Activated CD4-positive, alpha-beta memory T cell treated with anti-CD3 and anti-CD28 coated beads for 36 hours (primary cell): ENCODE measurements at regions of chr2 and their contacts with region 1.

Region 1: GRCh38 chr2:171319164-171319810 is 114.5 kb downstream of the METTL8 start:
- DNase-seq: peak; percentile 78
- H3K4me3 Mint-ChIP-seq: peak overlapping the region; percentile 69
- H3K27ac Mint-ChIP-seq: peak overlapping the region; percentile 99
- H3K4me1 Mint-ChIP-seq: peaks cover 61% of the 10 kb centered on the region
- H3K27me3 Mint-ChIP-seq: no peaks in the 10 kb centered on the region

Region 2: GRCh38 chr2:171095014-171095582 is 224.2 kb before region 1 on chr2:
- CTCF ChIA-PET with region 1: interaction called, 4 read pairs
- POLR2A ChIA-PET with region 1: no interaction called
- intact Hi-C with region 1: loop called (anchors 2 kb)
- DNase-seq: no peak
- H3K4me3 Mint-ChIP-seq: no peak overlapping the region
- H3K27ac Mint-ChIP-seq: peak overlapping the region; percentile 24
- H3K4me1 Mint-ChIP-seq: peaks cover 37% of the 10 kb centered on the region
- H3K27me3 Mint-ChIP-seq: no peaks in the 10 kb centered on the region

Region 3: DNA sequence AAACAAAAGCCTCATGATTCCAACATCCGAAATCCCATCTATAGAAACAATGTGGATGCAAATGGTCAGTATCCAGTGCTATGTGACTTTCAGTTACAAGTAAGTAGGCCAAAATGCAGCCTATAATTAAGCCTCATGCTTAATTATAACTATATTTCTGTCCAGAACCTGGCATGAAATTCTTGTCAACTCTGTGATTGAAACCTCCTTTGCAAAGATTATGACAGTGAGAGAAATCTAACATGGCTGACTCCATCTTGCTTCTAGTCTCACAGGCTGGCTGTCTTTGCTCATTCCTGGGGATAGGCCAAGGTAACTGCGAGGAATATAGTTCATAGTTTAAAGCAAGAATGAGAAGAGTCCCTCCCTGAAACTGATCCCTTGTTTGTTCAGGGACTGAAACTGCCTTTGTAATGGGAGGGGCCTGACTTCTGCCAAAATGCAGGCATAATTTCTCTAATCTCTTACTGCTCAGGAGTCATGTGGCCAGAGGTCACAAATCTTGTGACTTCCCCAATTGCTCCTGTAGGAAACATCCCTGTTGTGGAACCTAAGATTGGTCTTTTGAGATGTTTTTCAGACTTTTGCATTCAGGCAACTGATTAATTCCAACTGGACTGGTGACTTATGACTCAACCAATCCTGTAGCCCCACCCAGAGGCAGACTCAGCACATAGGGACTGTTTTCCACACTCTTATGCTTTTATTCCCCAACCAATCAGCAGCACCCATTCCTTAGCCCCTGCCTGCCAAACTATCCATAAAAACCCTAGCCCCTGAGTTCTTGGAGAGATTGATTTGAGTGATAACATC is 74.1 kb before region 1 on chr2:
- CTCF ChIA-PET with region 1: no interaction called
- POLR2A ChIA-PET with region 1: interaction called, 4 read pairs
- intact Hi-C with region 1: loop called (anchors 1 kb)
- DNase-seq: peak; percentile 13
- H3K4me3 Mint-ChIP-seq: no peak overlapping the region
- H3K27ac Mint-ChIP-seq: no peak overlapping the region
- H3K4me1 Mint-ChIP-seq: peaks cover 50% of the 10 kb centered on the region
- H3K27me3 Mint-ChIP-seq: no peaks in the 10 kb centered on the region

Region 4: DNA sequence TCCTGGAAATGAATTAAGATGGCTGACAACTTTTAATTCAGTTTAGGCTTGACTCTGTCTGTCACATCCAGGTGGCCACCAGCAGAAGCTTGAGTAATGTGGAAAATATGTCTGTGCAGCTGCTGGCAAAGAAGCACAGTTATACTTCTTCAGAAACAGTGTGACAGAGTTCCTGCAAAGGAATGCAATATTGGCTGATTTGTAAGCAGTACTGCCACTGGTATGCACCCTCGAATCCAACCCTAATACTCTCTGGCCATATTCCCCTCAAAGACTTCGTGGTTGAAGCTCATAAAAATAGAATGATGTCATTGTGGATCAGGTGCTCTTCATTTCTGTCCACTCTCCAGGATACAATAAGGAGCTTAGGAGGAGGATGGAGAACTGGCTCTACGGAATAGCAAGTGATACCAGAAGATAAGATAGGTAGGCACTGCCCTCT is 28.3 kb after region 1 on chr2:
- CTCF ChIA-PET with region 1: no interaction called
- POLR2A ChIA-PET with region 1: interaction called, 5 read pairs
- intact Hi-C with region 1: loop called (anchors 1 kb)
- DNase-seq: peak; percentile 39
- H3K4me3 Mint-ChIP-seq: no peak overlapping the region
- H3K27ac Mint-ChIP-seq: peak overlapping the region; percentile 65
- H3K4me1 Mint-ChIP-seq: peaks cover 31% of the 10 kb centered on the region
- H3K27me3 Mint-ChIP-seq: no peaks in the 10 kb centered on the region

Region 5: GRCh38 chr2:171433763-171434670 is 114.7 kb after region 1 on chr2 and contains the starts of genes DCAF17 and METTL8:
- CTCF ChIA-PET with region 1: no interaction called
- POLR2A ChIA-PET with region 1: interaction called, 4 read pairs
- intact Hi-C with region 1: loop called (anchors 1 kb)
- DNase-seq: peak; percentile 96
- H3K4me3 Mint-ChIP-seq: peak within 1 kb of the TSS; percentile 92
- H3K27ac Mint-ChIP-seq: peak within 1 kb of the TSS; percentile 92
- H3K4me1 Mint-ChIP-seq: peaks cover 57% of the 10 kb centered on the region
- H3K27me3 Mint-ChIP-seq: no peaks in the 10 kb centered on the region
- total RNA-seq, gene DCAF17: 14.1 to 14.7 TPM
- total RNA-seq, gene METTL8: 33.3 to 40.9 TPM